ENCODE measurements at regions of chr20 and their contacts with region 1.

Region 1: DNA sequence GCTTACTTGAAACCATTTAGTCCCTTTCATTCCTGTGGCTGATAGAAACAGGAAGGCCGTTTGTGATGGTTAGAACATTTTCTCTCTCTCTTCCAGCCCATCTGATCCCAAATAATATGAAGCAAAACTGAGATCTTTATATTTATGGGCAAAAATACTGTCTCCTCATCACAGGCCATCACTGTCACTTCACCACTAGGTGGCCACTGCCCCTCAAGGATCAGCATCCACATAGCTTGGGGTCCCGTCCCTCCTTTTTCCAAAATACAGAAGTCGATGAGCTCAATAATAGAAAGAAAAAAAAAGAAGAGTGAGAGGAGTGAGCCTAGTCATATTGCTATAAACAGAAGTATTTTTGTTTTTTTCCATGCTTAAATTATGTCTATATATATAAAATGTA is 46.4 kb upstream of the LAMP5 start:
- DNase-seq: peak; percentile 5
- H3K4me3 ChIP-seq: no peak overlapping the region
- H3K27ac ChIP-seq: no peak overlapping the region
- H3K4me1 ChIP-seq: no peaks in the 10 kb centered on the region
- CTCF ChIP-seq: peak; percentile 80

Region 2: DNA sequence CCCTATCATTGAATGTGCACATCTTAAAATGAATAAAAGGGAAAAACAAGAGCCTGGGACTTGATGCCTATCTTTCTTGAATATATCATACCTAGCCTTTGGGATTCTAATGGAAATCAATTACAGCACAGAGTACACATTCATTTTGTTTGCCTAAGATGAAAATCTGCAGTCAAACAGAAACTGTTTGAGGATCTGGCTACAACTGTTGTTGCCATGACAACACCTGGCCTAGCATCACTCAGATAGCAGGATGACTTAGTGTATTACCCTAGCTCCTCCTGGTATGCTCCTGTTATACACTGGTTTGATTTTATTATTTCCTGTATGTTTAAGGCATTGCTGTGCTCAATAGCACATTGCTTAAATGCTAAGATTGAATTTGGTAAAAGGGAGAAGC is 25.1 kb before region 1 on chr20:
- CTCF ChIA-PET with region 1: no interaction called
- POLR2A ChIA-PET with region 1: no interaction called
- intact Hi-C with region 1: no loop called
- DNase-seq: no peak
- H3K4me3 ChIP-seq: no peak overlapping the region
- H3K27ac ChIP-seq: no peak overlapping the region
- H3K4me1 ChIP-seq: no peaks in the 10 kb centered on the region
- CTCF ChIP-seq: no peak

Region 3: GRCh38 chr20:9609887-9610502 is 142.0 kb after region 1 on chr20:
- CTCF ChIA-PET with region 1: no interaction called
- POLR2A ChIA-PET with region 1: no interaction called
- intact Hi-C with region 1: loop called (anchors 2 kb)
- DNase-seq: peak; percentile 68
- H3K4me3 ChIP-seq: no peak overlapping the region
- H3K27ac ChIP-seq: no peak overlapping the region
- H3K4me1 ChIP-seq: peaks cover 1% of the 10 kb centered on the region
- CTCF ChIP-seq: peak; percentile 87

Region 4: DNA sequence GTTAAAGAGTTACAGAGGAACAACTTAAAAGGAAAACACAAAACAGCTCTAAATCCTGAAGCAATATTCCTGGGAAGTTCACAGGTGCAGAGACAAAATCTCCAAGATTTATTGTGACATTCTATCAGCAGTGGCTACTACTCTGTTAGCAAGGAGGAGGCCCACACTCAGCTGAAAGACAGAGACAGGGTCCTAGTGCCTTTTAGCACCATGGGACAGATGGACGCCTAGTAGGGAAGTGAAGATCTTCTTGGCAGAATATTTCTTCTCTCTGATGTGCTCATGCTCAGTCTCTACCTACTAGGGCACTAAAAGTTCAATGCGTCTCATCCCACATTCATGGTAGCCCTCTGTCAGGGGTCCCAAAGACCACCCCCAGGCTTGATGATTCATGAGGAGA is 179.7 kb after region 1 on chr20:
- CTCF ChIA-PET with region 1: no interaction called
- POLR2A ChIA-PET with region 1: no interaction called
- intact Hi-C with region 1: no loop called
- DNase-seq: no peak
- H3K4me3 ChIP-seq: no peak overlapping the region
- H3K27ac ChIP-seq: no peak overlapping the region
- H3K4me1 ChIP-seq: no peaks in the 10 kb centered on the region
- CTCF ChIP-seq: no peak

Region 5: GRCh38 chr20:10805764-10806163 is 1337.8 kb after region 1 on chr20:
- CTCF ChIA-PET with region 1: no interaction called
- POLR2A ChIA-PET with region 1: interaction called, 10 read pairs
- intact Hi-C with region 1: no loop called
- DNase-seq: no peak
- H3K4me3 ChIP-seq: no peak overlapping the region
- H3K27ac ChIP-seq: no peak overlapping the region
- H3K4me1 ChIP-seq: no peaks in the 10 kb centered on the region
- CTCF ChIP-seq: no peak